GM10248 (cell line): ENCODE measurements at regions of chr5 and their contacts with region 1.

Region 1: GRCh38 chr5:107571621-107572536 is 98.9 kb downstream of the EFNA5 start:
- DNase-seq: peak; percentile 69
- CTCF ChIP-seq: peak; percentile 97

Region 2: DNA sequence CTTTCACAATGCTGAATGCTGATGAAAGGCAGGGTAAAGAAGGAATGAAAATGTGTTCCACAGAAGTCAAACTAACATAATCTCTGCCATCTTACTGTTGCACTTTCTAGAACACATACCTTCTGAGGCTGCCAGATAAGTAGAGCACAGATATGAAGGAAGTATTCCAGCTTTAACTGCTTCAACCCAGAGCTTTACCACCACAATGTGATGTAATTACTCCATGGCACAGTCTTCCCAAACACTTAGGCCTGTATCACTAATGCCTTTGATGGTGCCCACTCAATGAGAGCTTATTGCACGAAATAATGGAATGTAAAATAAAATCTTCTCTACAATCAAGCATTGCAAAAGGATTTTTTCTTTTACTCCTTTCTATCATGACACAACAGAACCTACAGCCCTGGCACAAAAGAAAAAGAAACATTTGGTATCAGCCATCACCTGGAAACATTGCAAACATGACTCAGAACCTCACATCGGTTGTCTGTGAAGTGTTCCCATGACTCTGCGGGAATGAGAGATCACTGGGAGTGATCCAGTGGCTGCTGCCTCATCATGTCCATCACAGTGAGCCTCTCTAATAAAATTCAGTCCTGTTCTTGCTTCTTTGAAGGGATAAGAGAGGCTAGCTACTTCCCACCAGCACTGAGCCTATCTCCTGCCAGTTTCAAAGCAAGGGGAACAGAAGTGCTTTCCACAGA is 286.9 kb before region 1 on chr5:
- CTCF ChIA-PET with region 1: no interaction called
- POLR2A ChIA-PET with region 1: no interaction called
- DNase-seq: no peak
- CTCF ChIP-seq: no peak

Region 3: DNA sequence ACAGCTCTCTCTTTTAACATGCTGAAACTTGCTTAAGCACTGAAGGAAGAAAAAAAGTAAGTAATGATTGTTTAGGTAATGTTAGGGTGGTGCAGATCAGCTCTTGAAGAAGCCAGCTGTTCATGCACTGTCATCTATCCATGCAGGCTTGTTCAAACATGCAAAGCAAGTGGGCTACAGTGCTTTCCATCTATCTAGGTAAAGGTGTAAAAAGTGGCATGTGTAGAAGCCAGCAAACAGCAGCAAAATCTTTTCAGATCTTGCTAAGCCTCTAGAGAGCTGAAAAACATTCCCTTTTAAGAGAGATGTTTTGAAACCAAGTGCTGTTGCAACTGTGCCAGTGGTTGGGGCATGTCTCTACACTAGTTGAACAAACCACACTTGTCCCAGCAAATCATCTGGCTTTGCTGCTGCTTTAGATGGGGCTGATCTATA is 115.6 kb before region 1 on chr5:
- CTCF ChIA-PET with region 1: interaction called, 17 read pairs
- POLR2A ChIA-PET with region 1: no interaction called
- DNase-seq: no peak
- CTCF ChIP-seq: no peak

Region 4: GRCh38 chr5:107505763-107506534 is 65.9 kb before region 1 on chr5:
- CTCF ChIA-PET with region 1: interaction called, 24 read pairs
- POLR2A ChIA-PET with region 1: no interaction called
- DNase-seq: no peak
- CTCF ChIP-seq: no peak

Region 5: GRCh38 chr5:107594253-107595045 is 22.6 kb after region 1 on chr5:
- CTCF ChIA-PET with region 1: interaction called, 29 read pairs
- POLR2A ChIA-PET with region 1: no interaction called
- DNase-seq: no peak
- CTCF ChIP-seq: no peak

Region 6: GRCh38 chr5:107633171-107633901 is 61.5 kb after region 1 on chr5:
- CTCF ChIA-PET with region 1: interaction called, 10 read pairs
- POLR2A ChIA-PET with region 1: no interaction called
- DNase-seq: no peak
- CTCF ChIP-seq: no peak